ENCODE measurements at regions of chr3 and their contacts with region 1.

Region 1: DNA sequence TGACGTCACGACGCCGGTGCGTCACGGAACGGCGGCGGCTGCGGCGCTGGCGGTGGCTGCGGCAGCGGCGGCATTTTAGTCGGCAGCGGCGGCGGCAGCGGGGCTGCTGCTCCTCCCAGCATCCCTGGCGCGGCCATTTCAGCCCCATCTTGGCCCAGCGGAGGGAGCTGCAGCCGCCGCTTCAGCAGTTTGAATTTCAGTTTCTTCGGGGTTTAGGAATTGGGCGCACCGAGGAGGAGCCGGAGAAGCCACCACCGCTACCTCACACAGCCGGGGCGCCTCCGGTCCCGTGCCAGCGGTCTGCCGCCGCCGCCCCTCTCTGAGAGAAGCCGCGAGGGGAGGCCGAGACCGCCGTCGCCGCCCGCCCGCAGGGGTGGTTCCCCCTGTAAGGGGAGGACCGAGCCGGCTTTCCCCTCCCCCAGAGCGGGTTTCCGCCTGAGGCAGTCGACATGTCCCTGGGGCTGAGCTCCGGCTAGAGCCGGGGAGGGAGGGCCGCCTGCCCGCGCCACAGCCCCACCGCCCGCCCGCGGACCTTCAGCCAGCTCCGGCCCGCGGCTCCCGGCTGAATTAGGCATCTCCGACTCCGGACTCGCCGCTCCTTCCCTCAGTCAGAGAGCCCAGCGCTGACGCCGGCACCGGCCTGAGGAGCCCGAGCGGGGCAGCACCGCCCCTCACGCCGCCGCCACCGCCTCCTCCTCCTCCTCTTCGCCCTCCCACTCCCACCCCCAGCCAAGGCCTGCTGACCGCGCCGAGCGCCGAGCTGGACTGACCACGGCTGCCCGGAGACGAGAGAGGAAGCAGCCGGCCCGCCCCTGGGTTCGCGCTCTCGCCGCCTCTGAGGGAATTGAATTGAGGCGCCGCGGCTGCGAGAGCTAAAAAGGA is at the start of gene TSC22D2:
- DNase-seq: peak; percentile 79 to 97
- H3K4me3 ChIP-seq: peak within 1 kb of the TSS; percentile 69
- H3K27ac ChIP-seq: peak within 1 kb of the TSS; percentile 97
- H3K4me1 ChIP-seq: peaks cover 17% of the 10 kb centered on the region
- H3K27me3 ChIP-seq: no peaks in the 10 kb centered on the region
- CTCF ChIP-seq: 0 out of 2 replicates have a peak, but pooled peaks have one; percentile 18
- total RNA-seq, gene TSC22D2: 20.5 and 32.0 TPM in 2 replicates

Region 2: DNA sequence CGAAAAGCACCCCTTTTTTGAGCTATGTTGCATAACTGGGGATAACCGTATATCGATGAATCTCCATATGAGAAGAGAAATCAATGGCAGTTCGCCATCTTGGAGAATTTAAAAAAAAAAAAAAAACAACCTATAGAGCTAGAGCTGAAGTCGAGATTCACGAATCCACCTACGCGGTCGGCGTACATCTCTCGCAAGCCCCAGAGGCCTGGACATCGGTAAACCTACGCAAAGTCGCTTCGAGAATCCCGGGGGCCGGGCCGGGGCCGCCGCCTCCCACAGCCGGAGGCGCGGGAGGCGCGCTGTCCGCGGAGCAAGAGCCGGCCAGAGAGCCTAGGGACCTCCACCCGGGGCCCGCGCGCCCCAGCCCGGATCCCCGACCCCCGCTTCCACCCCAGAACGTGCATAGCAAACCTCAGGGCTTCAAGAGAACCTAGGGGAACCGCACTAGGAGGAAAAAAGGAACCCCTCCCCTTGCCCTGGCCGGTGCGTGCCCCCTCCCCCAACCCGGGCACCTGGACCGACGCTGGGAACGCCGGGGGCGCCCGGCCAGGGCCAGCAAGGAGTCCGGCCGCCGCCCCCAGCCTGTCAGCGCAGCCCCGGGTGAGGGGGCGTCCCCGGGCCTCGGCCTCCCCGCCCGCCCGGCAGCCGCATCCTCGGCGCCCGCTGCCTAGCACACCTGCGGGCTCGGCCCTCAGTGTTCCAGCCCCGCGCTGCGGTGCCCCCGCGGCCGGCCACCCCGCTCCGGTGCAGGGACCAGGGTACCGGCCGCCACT is 438.3 kb before region 1 on chr3:
- CTCF ChIA-PET with region 1: no interaction called
- POLR2A ChIA-PET with region 1: no interaction called
- intact Hi-C with region 1: loop called (anchors 2 kb)
- DNase-seq: peak; percentile 79 to 90
- H3K4me3 ChIP-seq: peak overlapping the region; percentile 78
- H3K27ac ChIP-seq: peak overlapping the region; percentile 88
- H3K4me1 ChIP-seq: peaks cover 35% of the 10 kb centered on the region
- H3K27me3 ChIP-seq: no peaks in the 10 kb centered on the region
- CTCF ChIP-seq: no peak

Region 3: DNA sequence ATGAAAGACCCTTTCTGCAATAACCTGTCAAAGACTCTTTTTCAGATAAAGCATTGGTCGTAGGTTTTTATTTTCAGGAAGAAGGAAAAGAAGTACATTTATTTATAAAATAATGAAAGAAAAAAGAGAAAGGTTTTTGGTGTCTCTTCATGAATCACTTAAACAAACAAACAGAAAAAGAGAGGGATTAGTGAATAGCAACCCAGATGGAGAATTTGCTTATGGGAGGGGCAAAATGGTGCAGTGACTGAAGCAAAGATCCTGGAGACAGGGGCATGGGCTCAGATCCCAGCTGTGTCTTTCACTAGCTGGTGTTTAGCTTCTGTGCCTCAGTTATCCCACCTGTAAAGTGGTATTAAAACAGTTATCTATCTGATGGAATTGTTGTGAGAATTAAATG is 359.1 kb before region 1 on chr3:
- CTCF ChIA-PET with region 1: no interaction called
- POLR2A ChIA-PET with region 1: no interaction called
- intact Hi-C with region 1: no loop called
- DNase-seq: no peak
- H3K4me3 ChIP-seq: no peak overlapping the region
- H3K27ac ChIP-seq: no peak overlapping the region
- H3K4me1 ChIP-seq: no peaks in the 10 kb centered on the region
- H3K27me3 ChIP-seq: no peaks in the 10 kb centered on the region
- CTCF ChIP-seq: no peak

Region 4: DNA sequence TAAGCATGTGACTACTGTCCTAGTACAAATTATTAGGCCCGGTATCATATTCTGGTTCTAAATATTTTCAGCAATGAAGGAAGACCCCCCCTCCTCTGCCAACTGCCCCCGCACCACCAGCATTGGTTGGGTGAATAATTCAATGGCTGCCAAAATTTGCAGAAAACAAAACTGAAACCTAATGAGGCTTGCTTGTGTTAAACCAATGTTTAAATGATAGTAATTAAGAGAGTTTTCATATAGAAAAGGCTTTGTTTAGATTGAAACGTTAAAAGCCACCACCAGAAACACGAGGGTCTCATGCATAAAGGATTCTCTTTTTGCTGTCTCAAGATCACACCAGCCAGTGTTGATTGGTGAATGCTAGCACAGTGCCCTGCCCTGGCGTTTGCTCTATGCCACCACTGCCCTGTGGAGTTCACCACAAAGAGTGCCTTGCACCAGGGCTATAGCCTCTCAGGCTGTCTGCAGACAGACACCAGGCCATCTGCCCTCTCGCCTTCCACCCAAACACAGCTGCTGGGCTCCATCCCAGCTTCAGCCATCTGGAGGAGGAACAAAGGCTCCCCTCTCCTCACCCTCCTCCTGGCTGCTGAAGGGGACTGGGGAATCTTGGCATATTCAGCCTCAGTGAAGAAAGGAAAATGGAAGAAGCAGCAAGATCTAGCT is 237.5 kb before region 1 on chr3:
- CTCF ChIA-PET with region 1: no interaction called
- POLR2A ChIA-PET with region 1: no interaction called
- intact Hi-C with region 1: no loop called
- DNase-seq: no peak
- H3K4me3 ChIP-seq: no peak overlapping the region
- H3K27ac ChIP-seq: no peak overlapping the region
- H3K4me1 ChIP-seq: no peaks in the 10 kb centered on the region; the same call in 1 of the 2 replicates
- H3K27me3 ChIP-seq: no peaks in the 10 kb centered on the region
- CTCF ChIP-seq: no peak

Region 5: GRCh38 chr3:150238998-150239619 is 169.4 kb before region 1 on chr3:
- CTCF ChIA-PET with region 1: interaction called, 4 read pairs
- POLR2A ChIA-PET with region 1: interaction called, 14 read pairs
- intact Hi-C with region 1: loop called (anchors 2 kb)
- DNase-seq: peak; percentile 36 to 41
- H3K4me3 ChIP-seq: peak overlapping the region; percentile 37; the same call in 1 of the 2 replicates
- H3K27ac ChIP-seq: peak overlapping the region; percentile 91
- H3K4me1 ChIP-seq: peaks cover 43% of the 10 kb centered on the region
- H3K27me3 ChIP-seq: no peaks in the 10 kb centered on the region
- CTCF ChIP-seq: peak; percentile 62

Region 6: GRCh38 chr3:150314248-150315004 is 94.0 kb before region 1 on chr3:
- CTCF ChIA-PET with region 1: no interaction called
- POLR2A ChIA-PET with region 1: interaction called, 5 read pairs
- intact Hi-C with region 1: loop called (anchors 2 kb)
- DNase-seq: peak; percentile 75 to 92
- H3K4me3 ChIP-seq: no peak overlapping the region
- H3K27ac ChIP-seq: peak overlapping the region; percentile 36
- H3K4me1 ChIP-seq: peaks cover 60% of the 10 kb centered on the region
- H3K27me3 ChIP-seq: no peaks in the 10 kb centered on the region
- CTCF ChIP-seq: no peak

Region 7: GRCh38 chr3:150393745-150394144 is 14.7 kb before region 1 on chr3:
- CTCF ChIA-PET with region 1: no interaction called
- POLR2A ChIA-PET with region 1: interaction called, 10 read pairs
- intact Hi-C with region 1: no loop called
- DNase-seq: no peak
- H3K4me3 ChIP-seq: no peak overlapping the region
- H3K27ac ChIP-seq: no peak overlapping the region
- H3K4me1 ChIP-seq: peaks cover 10% of the 10 kb centered on the region; the same call in 1 of the 2 replicates
- H3K27me3 ChIP-seq: no peaks in the 10 kb centered on the region
- CTCF ChIP-seq: no peak

Region 8: GRCh38 chr3:150495563-150496168 is 87.2 kb after region 1 on chr3:
- CTCF ChIA-PET with region 1: interaction called, 10 read pairs
- POLR2A ChIA-PET with region 1: interaction called, 17 read pairs
- intact Hi-C with region 1: loop called (anchors 1 kb)
- DNase-seq: no peak
- H3K4me3 ChIP-seq: no peak overlapping the region
- H3K27ac ChIP-seq: no peak overlapping the region
- H3K4me1 ChIP-seq: peaks cover 28% of the 10 kb centered on the region
- H3K27me3 ChIP-seq: no peaks in the 10 kb centered on the region
- CTCF ChIP-seq: peak; percentile 82

Measured in PC-9 (cell line).